PC-3 (cell line): ENCODE measurements at regions of chr11 and their contacts with region 1.

Region 1: GRCh38 chr11:47642099-47642855 is at the start of gene MTCH2:
- DNase-seq: peak; percentile 95
- ATAC-seq: peak; percentile 92
- H3K4me3 ChIP-seq: peak within 1 kb of the TSS; percentile 88
- H3K27ac ChIP-seq: peak within 1 kb of the TSS; percentile 62
- H3K4me1 ChIP-seq: peaks cover 16% of the 10 kb centered on the region; the same call in 1 of the 2 replicates
- H3K27me3 ChIP-seq: no peaks in the 10 kb centered on the region
- CTCF ChIP-seq: 0 out of 2 replicates have a peak, but pooled peaks have one; percentile 22
- total RNA-seq, gene MTCH2: 84.0 and 88.1 TPM in 2 replicates

Region 2: GRCh38 chr11:47715082-47715669 is 72.9 kb after region 1 on chr11 and contains the start of gene AGBL2:
- CTCF ChIA-PET with region 1: no interaction called
- POLR2A ChIA-PET with region 1: no interaction called
- intact Hi-C with region 1: loop called (anchors 1 kb)
- DNase-seq: peak; percentile 32
- ATAC-seq: peak; percentile 91
- H3K4me3 ChIP-seq: peak within 1 kb of the TSS; percentile 63
- H3K27ac ChIP-seq: no peak within 1 kb of the TSS
- H3K4me1 ChIP-seq: no peaks in the 10 kb centered on the region
- H3K27me3 ChIP-seq: no peaks in the 10 kb centered on the region
- CTCF ChIP-seq: no peak
- total RNA-seq, gene AGBL2: 1.8 TPM in 1 of 2 replicates, not detected in the other

Region 3: GRCh38 chr11:47766305-47767227 is 124.3 kb after region 1 on chr11:
- CTCF ChIA-PET with region 1: no interaction called
- POLR2A ChIA-PET with region 1: no interaction called
- intact Hi-C with region 1: loop called (anchors 5 kb)
- DNase-seq: peak; percentile 39
- ATAC-seq: peak; percentile 18
- H3K4me3 ChIP-seq: peak overlapping the region; percentile 99
- H3K27ac ChIP-seq: peak overlapping the region; percentile 73
- H3K4me1 ChIP-seq: peaks cover 16% of the 10 kb centered on the region
- H3K27me3 ChIP-seq: no peaks in the 10 kb centered on the region
- CTCF ChIP-seq: no peak

Region 4: GRCh38 chr11:47847892-47848635 is 205.8 kb after region 1 on chr11 and contains the start of gene NUP160:
- CTCF ChIA-PET with region 1: no interaction called
- POLR2A ChIA-PET with region 1: no interaction called
- intact Hi-C with region 1: loop called (anchors 2 kb)
- DNase-seq: peak; percentile 61
- ATAC-seq: peak; percentile 89
- H3K4me3 ChIP-seq: peak within 1 kb of the TSS; percentile 85
- H3K27ac ChIP-seq: peak within 1 kb of the TSS; percentile 52
- H3K4me1 ChIP-seq: peaks cover 12% of the 10 kb centered on the region
- H3K27me3 ChIP-seq: no peaks in the 10 kb centered on the region
- CTCF ChIP-seq: no peak
- total RNA-seq, gene NUP160: 23.0 and 25.9 TPM in 2 replicates

Region 5: GRCh38 chr11:47869546-47870393 is 227.5 kb after region 1 on chr11:
- CTCF ChIA-PET with region 1: no interaction called
- POLR2A ChIA-PET with region 1: no interaction called
- intact Hi-C with region 1: no loop called
- DNase-seq: peak; percentile 49
- ATAC-seq: peak; percentile 45
- H3K4me3 ChIP-seq: no peak overlapping the region
- H3K27ac ChIP-seq: no peak overlapping the region; the same call in 1 of the 2 replicates
- H3K4me1 ChIP-seq: peaks cover 12% of the 10 kb centered on the region
- H3K27me3 ChIP-seq: no peaks in the 10 kb centered on the region
- CTCF ChIP-seq: no peak